Activated naive CD4-positive, alpha-beta T cell treated with anti-CD3 and anti-CD28 coated beads, Interleukin-2, amount 10 ng/mL, durations not matched to agents 7 days and 5 days (primary cell): ENCODE measurements at regions of chr1 and their contacts with region 1.

Region 1: GRCh38 chr1:185670187-185670627 is 64.0 kb upstream of the HMCN1 start:
- DNase-seq: peak; percentile 64
- H3K4me3 Mint-ChIP-seq: no peak overlapping the region
- H3K27ac Mint-ChIP-seq: no peak overlapping the region
- H3K4me1 Mint-ChIP-seq: peaks cover 28% of the 10 kb centered on the region
- H3K27me3 Mint-ChIP-seq: no peaks in the 10 kb centered on the region

Region 2: GRCh38 chr1:185317034-185317885 is 352.9 kb before region 1 on chr1 and contains the start of gene IVNS1ABP:
- CTCF ChIA-PET with region 1: interaction called, 16 read pairs
- DNase-seq: peak; percentile 96
- H3K4me3 Mint-ChIP-seq: peak within 1 kb of the TSS; percentile 95
- H3K27ac Mint-ChIP-seq: peak within 1 kb of the TSS; percentile 98
- H3K4me1 Mint-ChIP-seq: peaks cover 55% of the 10 kb centered on the region
- H3K27me3 Mint-ChIP-seq: no peaks in the 10 kb centered on the region

Region 3: GRCh38 chr1:185652348-185652747 is 17.9 kb before region 1 on chr1:
- CTCF ChIA-PET with region 1: interaction called, 15 read pairs
- DNase-seq: no peak
- H3K4me3 Mint-ChIP-seq: no peak overlapping the region
- H3K27ac Mint-ChIP-seq: no peak overlapping the region
- H3K4me1 Mint-ChIP-seq: peaks cover 9% of the 10 kb centered on the region
- H3K27me3 Mint-ChIP-seq: no peaks in the 10 kb centered on the region

Region 4: DNA sequence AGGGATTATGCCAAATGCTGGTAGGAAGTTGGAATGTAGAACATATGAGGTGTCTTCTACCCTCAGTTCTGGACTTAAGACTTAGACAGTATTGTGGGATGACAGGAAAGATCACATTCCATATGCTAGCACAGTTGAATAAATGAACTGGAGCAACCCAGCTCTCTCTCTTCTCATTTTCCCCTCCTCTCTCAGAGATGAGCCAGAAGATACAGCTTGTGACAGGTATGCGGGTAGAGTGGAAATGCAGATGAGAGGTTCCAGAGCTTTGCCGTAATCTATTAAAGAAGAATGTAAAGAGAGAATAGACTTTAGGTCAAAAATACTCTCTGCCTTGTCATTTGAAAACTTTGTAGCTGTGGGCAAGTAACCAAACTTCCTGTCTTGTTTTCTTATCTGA is 31.4 kb after region 1 on chr1:
- CTCF ChIA-PET with region 1: no interaction called
- DNase-seq: no peak
- H3K4me3 Mint-ChIP-seq: no peak overlapping the region
- H3K27ac Mint-ChIP-seq: no peak overlapping the region
- H3K4me1 Mint-ChIP-seq: no peaks in the 10 kb centered on the region
- H3K27me3 Mint-ChIP-seq: peaks cover 9% of the 10 kb centered on the region